HepG2 (cell line): ENCODE measurements at regions of chr6 and their contacts with region 1.

Region 1: GRCh38 chr6:26122793-26123674 is 35.8 kb downstream of the HFE start:
- DNase-seq: peak; percentile 100
- ATAC-seq: peak; percentile 71
- H3K4me3 ChIP-seq: peak overlapping the region; percentile 73 to 99 (median 83)
- H3K27ac ChIP-seq: peak overlapping the region; percentile 93
- H3K4me1 ChIP-seq: peaks cover 61% of the 10 kb centered on the region
- H3K27me3 ChIP-seq: no peaks in the 10 kb centered on the region; a peak in 2 of 5 replicates
- CTCF ChIP-seq: no peak
- EP300 ChIP-seq: peak; percentile 23 to 94; a peak in 2 of 4 replicates
- POLR2A ChIP-seq: peak; percentile 87 to 98
- RAD21 ChIP-seq: peak; percentile 49

Region 2: GRCh38 chr6:26025894-26026832 is 96.9 kb before region 1 on chr6:
- CTCF ChIA-PET with region 1: no interaction called
- POLR2A ChIA-PET with region 1: interaction called, 84 read pairs
- in situ Hi-C with region 1: no loop called
- intact Hi-C with region 1: no loop called
- DNase-seq: peak; percentile 97
- ATAC-seq: peak; percentile 68
- H3K4me3 ChIP-seq: peak overlapping the region; percentile 59 to 80 (median 71)
- H3K27ac ChIP-seq: peak overlapping the region; percentile 93
- H3K4me1 ChIP-seq: peaks cover 62% of the 10 kb centered on the region
- H3K27me3 ChIP-seq: no peaks in the 10 kb centered on the region; a peak in 1 of 5 replicates
- CTCF ChIP-seq: peak; percentile 95
- EP300 ChIP-seq: peak in 1 of 2 experiments; percentile 54; a peak in 2 of 4 replicates
- POLR2A ChIP-seq: peak in 1 of 2 experiments; percentile 28; a peak in 1 of 4 replicates
- RAD21 ChIP-seq: peak; percentile 77

Region 3: DNA sequence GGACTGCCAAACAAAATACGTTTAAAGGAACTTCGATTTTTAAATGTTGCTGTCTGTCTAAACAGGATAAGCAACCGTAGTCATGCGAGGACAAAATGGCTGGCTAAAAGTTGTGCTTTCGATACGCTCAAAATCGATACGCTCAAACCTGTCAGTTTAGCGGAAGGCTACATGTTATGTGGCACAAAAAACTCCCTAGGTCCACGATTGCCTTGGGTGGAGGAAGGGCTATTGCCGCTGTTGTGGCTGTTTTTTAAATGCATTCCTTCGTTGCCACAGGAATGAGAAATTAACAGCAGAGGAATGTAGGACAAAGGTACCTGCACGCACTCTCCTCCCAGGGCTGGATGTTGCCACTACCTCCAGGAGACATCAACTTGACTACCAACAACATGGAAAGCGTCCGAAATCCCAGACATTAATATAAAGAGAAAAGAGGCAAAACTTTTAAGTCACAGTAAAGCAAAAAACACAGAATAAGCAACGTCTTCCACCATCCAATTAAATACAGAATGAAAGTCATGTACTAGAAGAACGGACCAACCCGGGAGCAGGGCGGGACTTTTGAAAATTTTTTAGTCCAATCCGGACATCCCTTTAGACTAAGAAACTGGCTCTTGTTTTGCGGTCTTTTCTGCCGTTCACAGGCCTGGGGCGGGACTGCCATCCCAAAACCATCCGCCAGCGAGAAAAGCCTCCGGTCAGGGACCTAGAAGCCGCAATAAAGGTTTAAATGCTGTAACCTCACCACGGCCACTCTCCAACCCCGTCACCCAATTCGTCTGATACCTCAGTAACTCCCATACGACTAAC is 68.0 kb before region 1 on chr6:
- CTCF ChIA-PET with region 1: no interaction called
- POLR2A ChIA-PET with region 1: interaction called, 38 read pairs
- in situ Hi-C with region 1: no loop called
- intact Hi-C with region 1: loop called (anchors 1 kb)
- DNase-seq: peak; percentile 97
- ATAC-seq: peak; percentile 82
- H3K4me3 ChIP-seq: peak overlapping the region; percentile 69 to 85 (median 85)
- H3K27ac ChIP-seq: peak overlapping the region; percentile 90
- H3K4me1 ChIP-seq: peaks cover 26% of the 10 kb centered on the region
- H3K27me3 ChIP-seq: no peaks in the 10 kb centered on the region; a peak in 1 of 5 replicates
- CTCF ChIP-seq: peak; percentile 32; the same call in 1 of the 2 replicates
- EP300 ChIP-seq: peak in 1 of 2 experiments; percentile 27; a peak in 1 of 4 replicates
- POLR2A ChIP-seq: peak; percentile 79 to 98; a peak in 3 of 4 replicates
- RAD21 ChIP-seq: peak; percentile 50

Region 4: GRCh38 chr6:26141378-26141904 is 18.4 kb after region 1 on chr6:
- CTCF ChIA-PET with region 1: no interaction called
- POLR2A ChIA-PET with region 1: interaction called, 53 read pairs
- in situ Hi-C with region 1: no loop called
- intact Hi-C with region 1: no loop called
- DNase-seq: peak; percentile 46
- ATAC-seq: peak; percentile 77
- H3K4me3 ChIP-seq: no peak overlapping the region
- H3K27ac ChIP-seq: no peak overlapping the region
- H3K4me1 ChIP-seq: peaks cover 29% of the 10 kb centered on the region
- H3K27me3 ChIP-seq: no peaks in the 10 kb centered on the region
- CTCF ChIP-seq: no peak
- EP300 ChIP-seq: no peak
- POLR2A ChIP-seq: no peak
- RAD21 ChIP-seq: no peak

Region 5: GRCh38 chr6:26196846-26197648 is 74.0 kb after region 1 on chr6:
- CTCF ChIA-PET with region 1: no interaction called
- POLR2A ChIA-PET with region 1: interaction called, 272 read pairs
- in situ Hi-C with region 1: loop called (anchors 5 kb)
- intact Hi-C with region 1: loop called (anchors 2 kb)
- DNase-seq: peak; percentile 93
- ATAC-seq: peak; percentile 66
- H3K4me3 ChIP-seq: peak overlapping the region; percentile 81 to 90 (median 87)
- H3K27ac ChIP-seq: peak overlapping the region; percentile 94
- H3K4me1 ChIP-seq: peaks cover 30% of the 10 kb centered on the region
- H3K27me3 ChIP-seq: no peaks in the 10 kb centered on the region; a peak in 1 of 5 replicates
- CTCF ChIP-seq: peak; percentile 60
- EP300 ChIP-seq: peak; percentile 34 to 41; a peak in 2 of 4 replicates
- POLR2A ChIP-seq: peak; percentile 99
- RAD21 ChIP-seq: peak; percentile 53

Region 6: DNA sequence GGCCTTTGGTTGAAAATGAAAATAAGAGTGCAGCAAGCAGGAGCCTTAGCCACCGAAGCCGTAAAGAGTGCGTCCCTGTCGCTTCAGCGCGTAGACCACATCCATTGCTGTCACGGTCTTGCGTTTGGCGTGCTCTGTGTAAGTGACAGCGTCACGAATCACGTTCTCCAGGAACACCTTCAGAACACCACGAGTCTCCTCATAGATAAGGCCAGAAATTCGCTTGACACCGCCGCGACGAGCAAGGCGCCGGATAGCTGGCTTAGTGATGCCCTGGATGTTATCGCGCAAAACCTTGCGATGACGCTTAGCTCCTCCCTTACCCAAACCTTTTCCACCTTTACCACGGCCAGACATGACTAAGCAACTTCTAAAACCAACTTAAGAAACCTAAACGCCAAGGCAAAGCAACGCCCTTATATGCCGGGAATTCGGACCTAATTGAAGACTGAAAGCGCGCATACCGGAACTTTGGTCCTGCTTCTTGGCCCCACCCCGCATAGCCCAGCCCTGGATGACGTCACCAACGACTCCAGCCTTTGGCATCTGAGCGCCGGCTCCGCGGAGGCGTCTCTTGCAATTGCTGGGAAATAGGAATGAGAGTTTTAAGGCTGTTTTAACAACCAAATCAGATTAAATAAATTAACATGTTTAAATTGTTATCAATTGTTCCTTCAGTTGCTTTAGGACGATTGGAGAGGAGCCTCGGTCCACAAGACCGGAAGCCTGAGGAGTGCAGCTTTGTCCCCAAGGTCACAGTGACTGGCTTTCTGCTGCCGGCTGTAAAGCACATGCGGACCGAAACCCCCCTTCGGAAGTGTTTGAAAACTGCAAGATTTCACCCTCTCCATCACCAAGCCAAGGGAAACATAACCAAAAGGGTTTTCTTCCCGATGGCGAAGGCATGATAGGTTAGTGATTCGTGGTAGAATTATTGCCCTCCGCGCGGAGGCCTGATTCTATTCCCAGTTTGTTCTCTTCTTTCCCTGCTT is 162.4 kb after region 1 on chr6:
- CTCF ChIA-PET with region 1: no interaction called
- POLR2A ChIA-PET with region 1: interaction called, 15 read pairs
- in situ Hi-C with region 1: no loop called
- intact Hi-C with region 1: no loop called
- DNase-seq: peak; percentile 93
- ATAC-seq: peak; percentile 84
- H3K4me3 ChIP-seq: peak overlapping the region; percentile 76 to 89 (median 82)
- H3K27ac ChIP-seq: peak overlapping the region; percentile 85
- H3K4me1 ChIP-seq: peaks cover 19% of the 10 kb centered on the region
- H3K27me3 ChIP-seq: no peaks in the 10 kb centered on the region; a peak in 1 of 5 replicates
- CTCF ChIP-seq: peak; percentile 14; the same call in 1 of the 2 replicates
- EP300 ChIP-seq: peak; percentile 37 to 85; a peak in 3 of 4 replicates
- POLR2A ChIP-seq: peak; percentile 92 to 95
- RAD21 ChIP-seq: 0 out of 2 replicates have a peak, but pooled peaks have one; percentile 19

Region 7: DNA sequence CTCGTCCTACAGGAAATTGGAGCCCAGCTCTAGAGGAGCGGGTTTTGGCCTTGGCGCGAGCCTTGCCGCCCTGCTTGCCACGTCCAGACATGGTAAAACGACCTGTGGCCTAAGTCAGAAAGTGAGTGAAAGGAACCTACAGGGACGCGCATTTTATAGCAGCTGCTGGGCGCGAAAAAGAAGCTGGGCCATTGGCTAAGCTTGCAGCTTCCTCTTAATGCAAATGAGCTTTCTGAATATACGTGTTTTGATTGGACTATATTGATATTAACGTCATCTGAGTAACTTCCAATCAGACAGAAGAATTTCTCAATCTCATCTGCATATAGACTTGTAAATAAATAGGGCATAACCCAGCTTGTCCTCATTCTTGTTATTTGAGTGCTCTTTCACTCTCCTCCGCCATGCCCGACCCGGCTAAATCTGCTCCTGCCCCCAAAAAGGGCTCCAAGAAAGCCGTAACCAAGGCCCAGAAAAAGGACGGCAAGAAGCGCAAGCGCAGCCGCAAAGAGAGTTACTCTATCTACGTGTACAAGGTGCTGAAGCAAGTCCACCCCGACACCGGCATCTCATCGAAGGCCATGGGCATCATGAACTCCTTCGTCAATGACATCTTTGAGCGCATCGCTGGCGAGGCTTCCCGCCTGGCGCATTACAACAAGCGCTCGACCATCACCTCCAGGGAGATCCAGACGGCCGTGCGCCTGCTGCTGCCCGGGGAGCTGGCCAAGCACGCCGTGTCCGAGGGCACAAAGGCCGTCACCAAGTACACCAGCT is 1770.2 kb after region 1 on chr6:
- CTCF ChIA-PET with region 1: no interaction called
- POLR2A ChIA-PET with region 1: interaction called, 18 read pairs
- in situ Hi-C with region 1: no loop called
- intact Hi-C with region 1: no loop called
- DNase-seq: peak; percentile 99
- ATAC-seq: peak; percentile 70
- H3K4me3 ChIP-seq: peak overlapping the region; percentile 76 to 85 (median 82)
- H3K27ac ChIP-seq: peak overlapping the region; percentile 96
- H3K4me1 ChIP-seq: peaks cover 45% of the 10 kb centered on the region
- H3K27me3 ChIP-seq: no peaks in the 10 kb centered on the region; a peak in 1 of 5 replicates
- CTCF ChIP-seq: peak; percentile 39; the same call in 1 of the 2 replicates
- EP300 ChIP-seq: peak; percentile 41 to 53; a peak in 2 of 4 replicates
- POLR2A ChIP-seq: peak; percentile 98 to 99
- RAD21 ChIP-seq: peak; percentile 52; the same call in 1 of the 2 replicates